Activated T-helper 1 cell treated with anti-CD3 and anti-CD28 coated beads, Interleukin-12 subunit alpha, Interleukin-12 subunit beta, Interleukin-2, Interleukin-4 antibody, amounts not matched to agents 30 ng/mL and 10 ng/mL and 1 ng/mL, durations not matched to agents 14 hours and 24 hours and 36 hours (primary cell): ENCODE measurements at regions of chr11 and their contacts with region 1.

Region 1: GRCh38 chr11:112795142-112795815 is 165.9 kb upstream of the NCAM1 start:
- DNase-seq: no peak
- H3K4me3 Mint-ChIP-seq: no peak overlapping the region
- H3K27ac Mint-ChIP-seq: no peak overlapping the region
- H3K4me1 Mint-ChIP-seq: no peaks in the 10 kb centered on the region
- H3K27me3 Mint-ChIP-seq: no peaks in the 10 kb centered on the region

Region 2: GRCh38 chr11:112769170-112769569 is 26.1 kb before region 1 on chr11:
- intact Hi-C with region 1: no loop called
- DNase-seq: no peak
- H3K4me3 Mint-ChIP-seq: no peak overlapping the region
- H3K27ac Mint-ChIP-seq: no peak overlapping the region
- H3K4me1 Mint-ChIP-seq: no peaks in the 10 kb centered on the region
- H3K27me3 Mint-ChIP-seq: no peaks in the 10 kb centered on the region

Region 3: DNA sequence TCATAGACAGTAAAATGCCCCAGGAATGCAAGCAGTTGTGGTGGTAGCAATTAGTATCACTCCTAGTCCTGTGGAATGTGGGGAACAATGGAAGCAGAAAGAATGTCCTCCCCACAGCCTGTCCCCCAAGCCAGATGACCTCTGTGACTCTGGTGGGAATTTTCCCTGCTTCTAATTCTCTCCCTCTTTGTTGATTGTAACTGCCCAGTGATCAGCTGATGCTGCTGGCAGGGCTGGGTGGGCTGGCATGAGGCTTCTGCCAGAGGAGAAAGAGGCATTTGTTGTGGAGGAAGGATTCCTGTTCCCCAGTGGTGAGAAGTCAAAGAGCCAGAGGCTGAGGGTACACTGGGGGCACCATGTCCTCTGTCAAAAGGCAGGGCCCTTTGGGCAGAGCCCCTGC is 49.2 kb after region 1 on chr11:
- intact Hi-C with region 1: no loop called
- DNase-seq: no peak
- H3K4me3 Mint-ChIP-seq: no peak overlapping the region
- H3K27ac Mint-ChIP-seq: no peak overlapping the region
- H3K4me1 Mint-ChIP-seq: no peaks in the 10 kb centered on the region
- H3K27me3 Mint-ChIP-seq: peaks cover 4% of the 10 kb centered on the region

Region 4: GRCh38 chr11:113113801-113114706 is 318.8 kb after region 1 on chr11:
- intact Hi-C with region 1: loop called (anchors 2 kb)
- DNase-seq: no peak
- H3K4me3 Mint-ChIP-seq: no peak overlapping the region
- H3K27ac Mint-ChIP-seq: no peak overlapping the region
- H3K4me1 Mint-ChIP-seq: no peaks in the 10 kb centered on the region
- H3K27me3 Mint-ChIP-seq: peaks cover 3% of the 10 kb centered on the region